ENCODE measurements at regions of chr3 and their contacts with region 1.

Region 1: DNA sequence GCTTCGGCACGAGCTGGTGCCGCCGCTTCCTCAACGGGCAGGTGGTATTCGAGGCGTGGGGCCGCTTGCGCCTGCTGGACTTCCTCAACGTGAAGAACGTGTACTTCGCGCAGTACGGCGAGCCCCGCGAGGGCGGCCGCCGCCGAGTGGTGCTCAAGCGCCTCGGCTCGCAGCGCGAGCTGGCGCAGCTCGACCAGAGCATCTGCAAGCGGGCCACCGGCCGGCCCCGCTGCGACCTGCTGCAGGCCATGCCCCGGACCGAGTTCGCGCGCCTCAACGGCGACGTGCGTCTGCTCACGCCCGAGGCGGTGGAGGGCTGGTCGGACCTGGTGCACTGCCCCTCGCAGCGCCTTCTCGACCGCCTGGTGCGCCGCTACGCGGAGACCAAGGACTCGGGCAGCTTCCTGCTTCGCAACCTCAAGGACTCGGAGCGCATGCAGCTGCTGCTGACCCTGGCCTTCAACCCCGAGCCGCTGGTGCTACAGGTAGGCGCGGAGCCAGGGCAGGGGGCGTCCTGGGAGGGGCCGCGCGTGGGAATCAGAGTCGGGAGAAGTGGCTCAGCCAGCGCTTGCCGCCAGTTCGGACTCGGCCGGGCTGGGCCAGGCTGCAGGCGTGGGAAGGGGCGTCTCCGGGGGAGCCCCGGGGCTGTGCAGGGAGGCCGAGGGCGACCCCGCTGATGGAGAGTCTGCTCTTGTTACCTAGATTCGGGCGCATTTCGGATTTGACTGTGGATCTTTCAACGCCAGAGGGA is 1.1 kb downstream of the DIPK2A start:
- DNase-seq: peak; percentile 68
- ATAC-seq: peak; percentile 18
- H3K4me3 ChIP-seq: peak overlapping the region; percentile 51
- H3K27ac ChIP-seq: peak overlapping the region; percentile 39
- H3K4me1 ChIP-seq: no peaks in the 10 kb centered on the region
- H3K27me3 ChIP-seq: no peaks in the 10 kb centered on the region
- CTCF ChIP-seq: peak; percentile 52
- POLR2A ChIP-seq: no peak
- RAD21 ChIP-seq: peak; percentile 2; the same call in 1 of the 2 replicates

Region 2: DNA sequence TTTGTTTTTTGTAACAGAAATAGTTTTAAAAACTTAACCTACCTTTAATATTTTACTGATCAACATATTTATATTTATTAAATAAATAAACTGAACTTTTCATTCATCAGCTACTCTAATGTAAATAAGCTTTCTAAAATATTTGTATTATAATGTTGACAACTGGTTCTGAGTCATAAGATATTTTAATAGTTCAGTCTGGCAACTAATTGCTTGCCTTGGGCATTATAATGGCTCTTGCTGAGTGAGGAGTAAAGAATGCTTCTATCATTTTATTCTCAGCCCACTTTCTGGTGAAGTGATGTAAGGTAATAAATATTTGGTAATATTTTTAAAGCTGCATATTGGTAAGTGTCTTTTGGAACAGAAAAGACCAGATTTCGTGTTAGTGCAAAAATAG is 80.4 kb after region 1 on chr3:
- CTCF ChIA-PET with region 1: interaction called, 3 read pairs
- POLR2A ChIA-PET with region 1: no interaction called
- dilution Hi-C with region 1: no loop called
- in situ Hi-C with region 1: no loop called
- intact Hi-C with region 1: loop called (anchors 5 kb)
- DNase-seq: peak; percentile 75
- ATAC-seq: peak; percentile 86
- H3K4me3 ChIP-seq: no peak overlapping the region
- H3K27ac ChIP-seq: no peak overlapping the region
- H3K4me1 ChIP-seq: peaks cover 12% of the 10 kb centered on the region
- H3K27me3 ChIP-seq: no peaks in the 10 kb centered on the region
- CTCF ChIP-seq: no peak
- POLR2A ChIP-seq: no peak
- RAD21 ChIP-seq: no peak

Region 3: GRCh38 chr3:144294659-144295538 is 322.2 kb after region 1 on chr3:
- CTCF ChIA-PET with region 1: no interaction called
- POLR2A ChIA-PET with region 1: no interaction called
- dilution Hi-C with region 1: no loop called
- in situ Hi-C with region 1: no loop called
- intact Hi-C with region 1: loop called (anchors 10 kb)
- DNase-seq: no peak
- ATAC-seq: no peak
- H3K4me3 ChIP-seq: no peak overlapping the region
- H3K27ac ChIP-seq: no peak overlapping the region
- H3K4me1 ChIP-seq: no peaks in the 10 kb centered on the region
- H3K27me3 ChIP-seq: no peaks in the 10 kb centered on the region
- CTCF ChIP-seq: no peak
- POLR2A ChIP-seq: no peak
- RAD21 ChIP-seq: no peak

Region 4: GRCh38 chr3:144369129-144369879 is 396.6 kb after region 1 on chr3:
- CTCF ChIA-PET with region 1: no interaction called
- POLR2A ChIA-PET with region 1: no interaction called
- dilution Hi-C with region 1: no loop called
- in situ Hi-C with region 1: no loop called
- intact Hi-C with region 1: no loop called
- DNase-seq: no peak
- ATAC-seq: no peak
- H3K4me3 ChIP-seq: no peak overlapping the region
- H3K27ac ChIP-seq: no peak overlapping the region
- H3K4me1 ChIP-seq: no peaks in the 10 kb centered on the region
- H3K27me3 ChIP-seq: no peaks in the 10 kb centered on the region
- CTCF ChIP-seq: no peak
- POLR2A ChIP-seq: no peak
- RAD21 ChIP-seq: no peak

Region 5: DNA sequence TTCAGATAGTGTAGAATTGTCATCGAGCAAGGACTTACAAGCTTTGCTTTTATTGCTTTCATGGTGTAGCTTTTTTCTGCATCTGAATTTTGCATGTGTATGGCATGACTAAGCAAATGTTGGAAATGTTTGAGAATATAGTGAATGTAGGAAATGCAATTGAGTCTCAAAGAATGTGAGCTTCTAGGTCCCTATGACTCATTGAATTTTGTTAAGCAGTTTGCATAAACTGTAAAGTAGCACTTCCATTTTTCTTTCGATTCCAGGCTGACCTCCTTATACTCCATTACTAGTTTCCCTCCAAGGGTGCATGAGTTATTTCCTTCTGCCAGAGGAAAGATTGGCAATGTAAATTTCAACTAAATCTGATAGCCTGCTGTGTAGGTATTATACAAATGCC is 618.2 kb after region 1 on chr3:
- CTCF ChIA-PET with region 1: interaction called, 5 read pairs
- POLR2A ChIA-PET with region 1: interaction called, 5 read pairs
- dilution Hi-C with region 1: no loop called
- in situ Hi-C with region 1: no loop called
- intact Hi-C with region 1: loop called (anchors 2 kb)
- DNase-seq: peak; percentile 94
- ATAC-seq: peak; percentile 91
- H3K4me3 ChIP-seq: no peak overlapping the region
- H3K27ac ChIP-seq: no peak overlapping the region; the same call in 1 of the 2 replicates
- H3K4me1 ChIP-seq: no peaks in the 10 kb centered on the region; the same call in 1 of the 2 replicates
- H3K27me3 ChIP-seq: no peaks in the 10 kb centered on the region
- CTCF ChIP-seq: no peak
- POLR2A ChIP-seq: no peak
- RAD21 ChIP-seq: no peak

Region 6: GRCh38 chr3:144770915-144771351 is 798.3 kb after region 1 on chr3:
- CTCF ChIA-PET with region 1: no interaction called
- POLR2A ChIA-PET with region 1: no interaction called
- dilution Hi-C with region 1: no loop called
- in situ Hi-C with region 1: no loop called
- intact Hi-C with region 1: loop called (anchors 1 kb)
- DNase-seq: peak; percentile 38
- ATAC-seq: peak; percentile 81
- H3K4me3 ChIP-seq: no peak overlapping the region
- H3K27ac ChIP-seq: no peak overlapping the region
- H3K4me1 ChIP-seq: no peaks in the 10 kb centered on the region
- H3K27me3 ChIP-seq: no peaks in the 10 kb centered on the region
- CTCF ChIP-seq: peak; percentile 49
- POLR2A ChIP-seq: no peak
- RAD21 ChIP-seq: peak; percentile 58

Measured in IMR-90 (cell line).